ENCODE measurements at regions of chr12 and their contacts with region 1.

Region 1: DNA sequence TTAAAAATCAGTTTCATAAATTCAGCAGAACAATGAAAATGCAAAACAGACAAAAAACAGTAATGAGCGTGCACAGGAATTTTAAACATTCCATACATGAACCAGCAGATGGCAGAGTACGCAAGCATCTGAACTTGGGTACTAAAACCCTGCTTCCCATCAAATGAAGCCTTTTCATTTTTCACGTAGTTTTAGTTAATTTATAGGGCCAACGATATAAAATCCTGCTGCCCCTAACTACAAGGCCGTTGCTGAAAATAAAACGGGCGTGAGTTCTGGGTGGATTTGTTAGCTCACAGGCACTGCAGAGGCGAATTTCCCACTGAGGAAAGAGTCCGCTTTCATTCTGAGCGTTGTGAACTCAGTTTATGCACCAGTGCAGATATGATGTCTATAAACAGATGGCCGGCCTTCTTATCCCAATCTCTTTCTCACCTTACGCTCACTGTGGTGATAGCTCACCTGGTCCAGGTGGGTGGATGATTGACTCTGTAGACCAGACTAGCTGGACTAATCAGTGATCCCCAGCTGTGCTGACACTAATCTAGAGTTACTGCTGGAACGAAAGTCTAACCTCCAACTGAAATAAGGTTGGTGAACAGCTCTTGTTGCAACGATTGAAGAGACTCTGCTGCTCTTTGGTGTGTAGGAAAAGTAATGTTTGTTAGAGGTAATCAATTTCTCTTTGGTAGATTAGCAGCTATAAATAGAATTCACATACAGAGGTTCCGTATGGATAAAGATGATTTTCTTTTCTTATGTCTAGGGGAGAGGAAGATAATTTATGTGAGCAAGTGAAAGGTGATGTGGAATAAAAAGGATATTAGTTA is 89.2 kb downstream of the PDZRN4 start:
- DNase-seq: peak; percentile 2 to 16 (median 6)
- H3K4me3 ChIP-seq: no peak overlapping the region
- H3K4me3 Mint-ChIP-seq: no peak overlapping the region
- H3K27ac ChIP-seq: no peak overlapping the region
- H3K27ac Mint-ChIP-seq: no peak overlapping the region
- H3K4me1 ChIP-seq: no peaks in the 10 kb centered on the region
- H3K4me1 Mint-ChIP-seq: no peaks in the 10 kb centered on the region
- H3K27me3 ChIP-seq: no peaks in the 10 kb centered on the region
- H3K27me3 Mint-ChIP-seq: peaks cover 3 to 7% of the 10 kb centered on the region in 2 donors

Region 2: GRCh38 chr12:41250748-41251147 is 26.6 kb before region 1 on chr12:
- CTCF ChIA-PET with region 1: no interaction called
- POLR2A ChIA-PET with region 1: no interaction called
- intact Hi-C with region 1: no loop called
- DNase-seq: no peak
- H3K4me3 ChIP-seq: no peak overlapping the region
- H3K4me3 Mint-ChIP-seq: no peak overlapping the region
- H3K27ac ChIP-seq: no peak overlapping the region
- H3K27ac Mint-ChIP-seq: no peak overlapping the region
- H3K4me1 ChIP-seq: no peaks in the 10 kb centered on the region
- H3K4me1 Mint-ChIP-seq: no peaks in the 10 kb centered on the region
- H3K27me3 ChIP-seq: no peaks in the 10 kb centered on the region
- H3K27me3 Mint-ChIP-seq: no peaks in the 10 kb centered on the region

Region 3: DNA sequence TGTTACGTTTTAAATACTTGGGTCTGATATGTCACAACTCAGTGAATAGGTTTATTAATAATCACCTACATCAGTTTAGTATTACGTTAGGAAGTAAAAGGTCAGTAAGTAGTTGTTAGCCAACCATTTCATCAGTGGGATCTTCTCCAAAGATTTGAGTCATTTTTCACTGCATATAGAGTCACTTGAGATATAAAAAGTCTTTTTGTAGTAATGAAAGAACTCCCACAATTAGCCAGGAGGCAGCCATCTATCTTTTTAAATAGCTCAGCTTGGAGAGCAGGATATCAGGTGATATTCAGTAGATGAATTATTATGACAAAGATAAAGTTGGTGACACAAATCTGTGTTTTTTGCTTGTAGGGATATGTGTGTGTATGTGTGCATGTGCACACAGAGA is 220.1 kb after region 1 on chr12:
- CTCF ChIA-PET with region 1: no interaction called
- POLR2A ChIA-PET with region 1: no interaction called
- intact Hi-C with region 1: no loop called
- DNase-seq: no peak
- H3K4me3 ChIP-seq: no peak overlapping the region
- H3K4me3 Mint-ChIP-seq: no peak overlapping the region
- H3K27ac ChIP-seq: no peak overlapping the region
- H3K27ac Mint-ChIP-seq: no peak overlapping the region
- H3K4me1 ChIP-seq: no peaks in the 10 kb centered on the region
- H3K4me1 Mint-ChIP-seq: no peaks in the 10 kb centered on the region
- H3K27me3 ChIP-seq: no peaks in the 10 kb centered on the region
- H3K27me3 Mint-ChIP-seq: no peaks in the 10 kb centered on the region

Region 4: DNA sequence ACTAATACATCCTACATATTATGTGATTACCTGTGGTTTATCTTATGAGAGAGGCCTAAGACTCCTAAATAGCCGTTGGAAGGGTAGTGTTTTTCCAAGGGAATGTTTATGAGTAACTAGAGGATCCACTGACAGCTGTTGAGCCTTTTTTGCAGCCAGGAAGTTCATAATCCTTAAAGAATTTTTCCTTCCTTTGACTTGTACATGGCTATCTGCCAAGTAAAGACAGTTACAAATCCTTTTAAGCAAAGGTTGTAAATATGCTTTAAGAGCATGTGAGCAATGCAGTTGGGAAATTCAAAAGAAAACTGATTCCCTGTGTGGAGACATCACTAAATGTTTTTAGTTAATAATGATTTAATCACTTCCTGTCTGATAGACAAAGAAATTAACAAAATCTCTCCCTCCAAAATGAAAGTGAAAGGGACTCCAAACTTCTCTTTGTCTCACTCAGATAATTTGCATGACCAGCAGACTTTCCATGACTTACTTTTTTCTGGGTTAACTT is 244.6 kb after region 1 on chr12:
- CTCF ChIA-PET with region 1: no interaction called
- POLR2A ChIA-PET with region 1: no interaction called
- intact Hi-C with region 1: no loop called
- DNase-seq: peak in 2 of 5 donors; percentile 2 to 5
- H3K4me3 ChIP-seq: peak overlapping the region in 1 of 2 donors; percentile 11
- H3K4me3 Mint-ChIP-seq: peak overlapping the region; percentile 70 to 88 (median 74)
- H3K27ac ChIP-seq: no peak overlapping the region
- H3K27ac Mint-ChIP-seq: peak overlapping the region in 5 of 7 donors; percentile 4 to 77 (median 25)
- H3K4me1 ChIP-seq: peaks cover 15% of the 10 kb centered on the region
- H3K4me1 Mint-ChIP-seq: peaks cover 2 to 24% (median 15%) of the 10 kb centered on the region in 4 donors
- H3K27me3 ChIP-seq: no peaks in the 10 kb centered on the region
- H3K27me3 Mint-ChIP-seq: peaks cover under 1% of the 10 kb centered on the region in 2 donors

Region 5: DNA sequence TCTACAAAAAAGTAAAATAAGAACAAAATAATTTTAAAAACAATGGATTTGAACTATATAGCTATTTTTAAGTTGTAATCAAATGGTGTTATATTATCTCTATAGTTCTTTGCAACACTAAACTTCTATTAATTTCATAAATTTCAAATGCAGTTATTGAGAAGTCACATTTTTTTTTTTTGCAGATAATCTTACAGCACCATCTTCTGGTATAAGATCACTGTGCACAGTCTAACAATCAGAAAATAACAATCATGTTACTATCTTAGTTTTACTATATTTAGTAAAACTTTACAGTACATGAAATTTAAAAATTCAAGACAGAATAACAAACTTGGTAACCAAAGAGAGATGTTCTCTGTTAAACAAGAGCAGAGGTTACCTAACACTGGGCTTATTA is 826.8 kb after region 1 on chr12:
- CTCF ChIA-PET with region 1: no interaction called
- POLR2A ChIA-PET with region 1: no interaction called
- intact Hi-C with region 1: loop called (anchors 5 kb)
- DNase-seq: no peak
- H3K4me3 ChIP-seq: no peak overlapping the region
- H3K4me3 Mint-ChIP-seq: no peak overlapping the region
- H3K27ac ChIP-seq: no peak overlapping the region
- H3K27ac Mint-ChIP-seq: peak overlapping the region in 4 of 7 donors; percentile 30 to 77 (median 54)
- H3K4me1 ChIP-seq: peaks cover under 1% of the 10 kb centered on the region
- H3K4me1 Mint-ChIP-seq: peaks cover 0 to 1% (median under 1%) of the 10 kb centered on the region in 4 donors
- H3K27me3 ChIP-seq: no peaks in the 10 kb centered on the region
- H3K27me3 Mint-ChIP-seq: no peaks in the 10 kb centered on the region

Region 6: GRCh38 chr12:42779186-42779859 is 1502.0 kb after region 1 on chr12:
- CTCF ChIA-PET with region 1: no interaction called
- POLR2A ChIA-PET with region 1: no interaction called
- intact Hi-C with region 1: no loop called
- DNase-seq: no peak
- H3K4me3 ChIP-seq: no peak overlapping the region
- H3K4me3 Mint-ChIP-seq: no peak overlapping the region
- H3K27ac ChIP-seq: no peak overlapping the region
- H3K27ac Mint-ChIP-seq: no peak overlapping the region
- H3K4me1 ChIP-seq: no peaks in the 10 kb centered on the region
- H3K4me1 Mint-ChIP-seq: no peaks in the 10 kb centered on the region
- H3K27me3 ChIP-seq: no peaks in the 10 kb centered on the region
- H3K27me3 Mint-ChIP-seq: no peaks in the 10 kb centered on the region